ENCODE measurements at regions of chr17 and their contacts with region 1.

Region 1: DNA sequence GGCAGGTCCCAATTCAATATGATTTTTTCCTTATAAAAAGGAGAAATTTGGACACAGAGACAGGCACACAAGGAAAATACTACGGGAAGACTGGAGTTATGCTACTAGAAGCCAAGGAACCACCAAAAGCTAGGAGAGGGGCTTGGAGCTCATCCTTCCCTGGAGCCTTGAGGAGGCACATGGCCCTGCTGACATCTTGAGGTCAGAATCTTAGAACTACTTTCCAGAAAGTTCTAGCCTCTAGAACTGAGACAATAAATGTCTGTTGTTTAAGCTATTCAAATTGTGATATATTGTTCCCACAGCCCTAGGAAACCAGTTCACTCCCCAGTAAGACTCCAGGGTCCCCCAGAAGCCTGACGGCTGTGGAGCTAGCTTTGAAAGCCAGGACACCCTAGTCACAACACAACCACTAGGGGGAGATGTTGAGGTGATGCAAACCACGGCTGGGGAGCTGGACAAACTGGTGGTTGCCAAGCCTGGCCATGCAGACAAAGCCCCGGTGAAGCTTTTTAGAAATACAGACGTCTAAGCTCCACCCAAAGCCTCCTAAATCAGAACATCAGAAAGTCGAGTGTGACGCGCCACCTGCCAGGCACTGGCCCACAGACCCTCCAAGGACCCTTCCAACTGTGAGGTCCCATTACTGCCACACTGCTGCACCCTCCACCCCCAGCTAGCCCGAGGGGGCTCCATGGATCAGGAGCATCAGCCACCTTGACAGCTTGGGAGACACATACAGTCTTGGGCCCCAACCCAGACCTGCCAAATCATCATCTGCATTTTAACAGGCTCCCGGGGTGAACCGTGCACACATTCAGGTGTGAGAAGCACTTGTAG is 106.4 kb downstream of the SLC39A11 start:
- DNase-seq: peak; percentile 68
- ATAC-seq: peak; percentile 77
- H3K4me3 Mint-ChIP-seq: no peak overlapping the region
- H3K27ac Mint-ChIP-seq: no peak overlapping the region
- H3K4me1 Mint-ChIP-seq: peaks cover 2% of the 10 kb centered on the region
- H3K27me3 Mint-ChIP-seq: no peaks in the 10 kb centered on the region
- CTCF ChIP-seq: peak; percentile 76

Region 2: DNA sequence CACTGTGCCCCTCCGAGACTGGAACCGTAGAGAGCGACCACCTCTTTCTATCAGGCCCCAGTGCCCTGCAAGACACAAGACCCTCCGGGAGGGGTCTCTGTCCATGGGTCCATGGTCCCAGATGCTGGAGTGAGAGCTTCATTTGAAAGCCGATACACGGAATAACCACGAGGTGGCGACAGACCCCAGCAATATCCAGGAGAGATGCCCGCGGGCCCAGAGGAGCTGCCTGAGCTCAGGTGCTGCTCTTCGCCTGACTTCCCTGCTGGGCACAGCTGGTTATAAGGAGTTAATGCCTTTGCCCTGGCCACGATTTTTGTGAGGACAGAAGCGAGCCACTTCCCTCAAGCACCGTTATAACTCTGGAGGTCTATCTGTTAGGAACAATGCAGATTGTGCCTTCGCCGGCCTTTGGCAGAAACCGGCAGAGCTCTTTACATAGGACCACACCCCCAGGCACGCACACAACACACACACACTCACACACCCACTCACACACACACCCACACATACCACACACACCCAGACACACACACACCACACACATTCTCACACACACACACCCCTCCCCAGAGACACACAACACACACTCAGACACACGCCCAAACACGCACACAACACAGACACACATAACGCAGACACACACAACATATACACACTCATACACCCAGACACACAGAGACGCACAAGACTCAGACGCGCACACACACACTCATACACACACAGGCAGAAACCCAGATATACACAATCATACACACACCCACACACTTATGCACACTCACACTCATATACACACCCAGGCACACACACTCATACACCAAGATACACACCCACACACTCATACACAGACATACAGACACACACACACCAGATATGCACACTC is 428.9 kb before region 1 on chr17:
- CTCF ChIA-PET with region 1: interaction called, 13 read pairs
- POLR2A ChIA-PET with region 1: no interaction called
- intact Hi-C with region 1: no loop called
- DNase-seq: peak; percentile 78
- ATAC-seq: peak; percentile 73
- H3K4me3 Mint-ChIP-seq: no peak overlapping the region
- H3K27ac Mint-ChIP-seq: no peak overlapping the region
- H3K4me1 Mint-ChIP-seq: no peaks in the 10 kb centered on the region
- H3K27me3 Mint-ChIP-seq: peaks cover 2% of the 10 kb centered on the region
- CTCF ChIP-seq: peak; percentile 72

Region 3: DNA sequence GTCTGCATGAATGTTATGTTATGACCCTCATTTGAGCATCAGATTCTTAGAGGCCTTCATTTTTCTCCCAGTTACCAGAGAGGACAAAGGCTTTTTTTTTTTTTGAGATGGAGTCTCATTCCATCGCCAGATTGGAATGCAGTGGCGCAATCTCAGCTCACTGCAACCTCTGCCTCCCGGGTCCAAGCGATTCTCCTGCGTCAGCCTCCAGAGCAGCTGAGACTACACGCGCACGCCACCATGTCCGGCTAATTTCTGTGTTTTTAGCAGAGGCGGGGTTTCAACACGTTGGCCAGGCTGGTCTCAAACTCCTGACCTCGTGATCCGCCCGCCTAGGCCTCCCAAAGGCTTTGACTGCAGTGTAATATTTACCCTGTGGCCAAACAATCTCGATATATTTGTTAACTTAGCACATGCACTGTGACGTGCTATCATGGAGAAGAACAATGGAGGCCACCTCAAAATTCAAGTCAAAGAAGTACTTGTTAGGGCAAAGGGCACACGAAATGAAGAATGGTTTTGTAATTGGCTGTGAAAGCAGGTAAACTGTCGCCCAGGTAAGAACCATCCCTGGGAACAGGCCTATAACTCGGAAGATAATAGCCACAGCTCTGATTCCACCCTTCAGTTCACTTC is 197.0 kb before region 1 on chr17:
- CTCF ChIA-PET with region 1: no interaction called
- POLR2A ChIA-PET with region 1: no interaction called
- intact Hi-C with region 1: no loop called
- DNase-seq: no peak
- ATAC-seq: no peak
- H3K4me3 Mint-ChIP-seq: no peak overlapping the region
- H3K27ac Mint-ChIP-seq: no peak overlapping the region
- H3K4me1 Mint-ChIP-seq: no peaks in the 10 kb centered on the region
- H3K27me3 Mint-ChIP-seq: no peaks in the 10 kb centered on the region
- CTCF ChIP-seq: no peak

Region 4: GRCh38 chr17:72974605-72975232 is 11.4 kb before region 1 on chr17:
- CTCF ChIA-PET with region 1: interaction called, 10 read pairs
- POLR2A ChIA-PET with region 1: no interaction called
- intact Hi-C with region 1: no loop called
- DNase-seq: no peak
- ATAC-seq: no peak
- H3K4me3 Mint-ChIP-seq: no peak overlapping the region
- H3K27ac Mint-ChIP-seq: no peak overlapping the region
- H3K4me1 Mint-ChIP-seq: peaks cover 19% of the 10 kb centered on the region
- H3K27me3 Mint-ChIP-seq: no peaks in the 10 kb centered on the region
- CTCF ChIP-seq: no peak

Region 5: GRCh38 chr17:73000832-73001231 is 14.7 kb after region 1 on chr17:
- CTCF ChIA-PET with region 1: interaction called, 18 read pairs
- POLR2A ChIA-PET with region 1: no interaction called
- intact Hi-C with region 1: no loop called
- DNase-seq: no peak
- ATAC-seq: no peak
- H3K4me3 Mint-ChIP-seq: no peak overlapping the region
- H3K27ac Mint-ChIP-seq: no peak overlapping the region
- H3K4me1 Mint-ChIP-seq: no peaks in the 10 kb centered on the region
- H3K27me3 Mint-ChIP-seq: no peaks in the 10 kb centered on the region
- CTCF ChIP-seq: no peak

Region 6: GRCh38 chr17:73156166-73156840 is 170.2 kb after region 1 on chr17:
- CTCF ChIA-PET with region 1: interaction called, 27 read pairs
- POLR2A ChIA-PET with region 1: no interaction called
- intact Hi-C with region 1: loop called (anchors 5 kb)
- DNase-seq: peak; percentile 75
- ATAC-seq: peak; percentile 94
- H3K4me3 Mint-ChIP-seq: no peak overlapping the region
- H3K27ac Mint-ChIP-seq: no peak overlapping the region
- H3K4me1 Mint-ChIP-seq: peaks cover 8% of the 10 kb centered on the region
- H3K27me3 Mint-ChIP-seq: peaks cover 11% of the 10 kb centered on the region
- CTCF ChIP-seq: peak; percentile 77

Region 7: GRCh38 chr17:73166731-73167581 is 180.9 kb after region 1 on chr17:
- CTCF ChIA-PET with region 1: interaction called, 10 read pairs
- POLR2A ChIA-PET with region 1: no interaction called
- intact Hi-C with region 1: no loop called
- DNase-seq: peak; percentile 52
- ATAC-seq: peak; percentile 79
- H3K4me3 Mint-ChIP-seq: peak overlapping the region; percentile 29
- H3K27ac Mint-ChIP-seq: no peak overlapping the region
- H3K4me1 Mint-ChIP-seq: peaks cover 26% of the 10 kb centered on the region
- H3K27me3 Mint-ChIP-seq: peaks cover 66% of the 10 kb centered on the region
- CTCF ChIP-seq: no peak

Region 8: DNA sequence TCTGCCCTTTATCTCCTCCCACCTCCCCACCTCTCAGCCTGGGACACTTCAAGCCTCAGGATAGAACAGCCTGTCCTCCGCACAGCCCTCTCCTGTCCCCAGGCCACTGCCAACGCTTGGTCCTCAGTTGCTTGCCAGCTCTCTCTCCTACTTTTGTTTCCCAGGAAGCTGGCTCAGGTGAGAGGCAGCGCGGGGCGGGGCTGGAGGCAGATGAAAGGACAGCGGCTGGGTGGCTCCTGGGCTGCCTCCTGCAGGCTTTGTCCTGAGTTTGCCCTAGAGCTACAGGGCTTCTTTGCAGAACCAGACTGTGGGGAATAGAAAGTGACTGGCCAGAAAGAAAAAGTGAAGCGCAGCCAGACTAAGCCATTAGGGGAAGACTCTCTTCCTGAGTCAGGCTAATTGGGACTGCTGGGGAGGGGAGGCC is 373.9 kb after region 1 on chr17:
- CTCF ChIA-PET with region 1: no interaction called
- POLR2A ChIA-PET with region 1: no interaction called
- intact Hi-C with region 1: loop called (anchors 10 kb)
- DNase-seq: no peak
- ATAC-seq: no peak
- H3K4me3 Mint-ChIP-seq: no peak overlapping the region
- H3K27ac Mint-ChIP-seq: no peak overlapping the region
- H3K4me1 Mint-ChIP-seq: no peaks in the 10 kb centered on the region
- H3K27me3 Mint-ChIP-seq: no peaks in the 10 kb centered on the region
- CTCF ChIP-seq: no peak